ENCODE measurements at regions of chr10 and their contacts with region 1.

Region 1: DNA sequence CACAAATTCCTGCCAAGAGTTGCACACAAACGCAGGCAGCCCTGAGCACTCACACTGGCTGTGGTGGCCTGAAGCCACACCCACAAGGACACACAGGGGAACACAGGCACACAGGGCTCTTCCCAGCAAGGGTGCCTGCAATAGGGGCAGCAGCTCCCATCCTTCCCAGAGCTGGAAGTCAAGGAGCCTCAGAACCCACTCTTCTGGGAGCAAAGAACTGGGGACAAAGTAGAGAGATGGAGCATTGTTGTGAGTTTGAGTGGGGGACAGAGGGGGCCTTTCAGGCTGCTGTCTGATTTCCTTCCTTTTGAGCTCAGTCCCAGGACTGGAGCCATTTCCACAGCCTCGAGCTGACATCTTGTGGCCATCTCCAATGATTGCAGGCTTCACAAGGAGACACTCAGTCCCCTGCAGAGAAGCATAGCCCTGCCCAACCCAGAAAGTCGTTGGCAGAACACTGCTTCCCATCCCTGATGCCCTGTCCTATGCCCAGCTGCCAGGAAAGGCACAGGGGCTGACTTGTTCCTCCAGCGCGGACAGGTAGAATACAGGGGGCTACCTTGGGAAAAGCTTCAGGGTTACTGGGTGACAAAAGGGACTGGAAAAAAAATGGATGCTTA is 34.4 kb upstream of the SLF2 start:
- DNase-seq: no peak

Region 2: GRCh38 chr10:100562008-100562711 is 316.2 kb before region 1 on chr10:
- intact Hi-C with region 1: loop called (anchors 5 kb)
- DNase-seq: peak; percentile 82

Region 3: GRCh38 chr10:100670828-100671479 is 207.4 kb before region 1 on chr10:
- intact Hi-C with region 1: loop called (anchors 10 kb)
- DNase-seq: no peak